ENCODE measurements at regions of chr6 and their contacts with region 1.

Region 1: GRCh38 chr6:28393911-28394662 is 5.5 kb downstream of the ZSCAN12 start:
- DNase-seq: peak; percentile 20
- H3K4me3 ChIP-seq: no peak overlapping the region
- H3K27ac ChIP-seq: no peak overlapping the region
- H3K4me1 ChIP-seq: peaks cover 13% of the 10 kb centered on the region in 2 experiments; a peak in 3 of 4 replicates
- H3K27me3 ChIP-seq: no peaks in the 10 kb centered on the region
- CTCF ChIP-seq: peak; percentile 53
- EP300 ChIP-seq: no peak
- RAD21 ChIP-seq: peak; percentile 23; the same call in 1 of the 2 replicates

Region 2: DNA sequence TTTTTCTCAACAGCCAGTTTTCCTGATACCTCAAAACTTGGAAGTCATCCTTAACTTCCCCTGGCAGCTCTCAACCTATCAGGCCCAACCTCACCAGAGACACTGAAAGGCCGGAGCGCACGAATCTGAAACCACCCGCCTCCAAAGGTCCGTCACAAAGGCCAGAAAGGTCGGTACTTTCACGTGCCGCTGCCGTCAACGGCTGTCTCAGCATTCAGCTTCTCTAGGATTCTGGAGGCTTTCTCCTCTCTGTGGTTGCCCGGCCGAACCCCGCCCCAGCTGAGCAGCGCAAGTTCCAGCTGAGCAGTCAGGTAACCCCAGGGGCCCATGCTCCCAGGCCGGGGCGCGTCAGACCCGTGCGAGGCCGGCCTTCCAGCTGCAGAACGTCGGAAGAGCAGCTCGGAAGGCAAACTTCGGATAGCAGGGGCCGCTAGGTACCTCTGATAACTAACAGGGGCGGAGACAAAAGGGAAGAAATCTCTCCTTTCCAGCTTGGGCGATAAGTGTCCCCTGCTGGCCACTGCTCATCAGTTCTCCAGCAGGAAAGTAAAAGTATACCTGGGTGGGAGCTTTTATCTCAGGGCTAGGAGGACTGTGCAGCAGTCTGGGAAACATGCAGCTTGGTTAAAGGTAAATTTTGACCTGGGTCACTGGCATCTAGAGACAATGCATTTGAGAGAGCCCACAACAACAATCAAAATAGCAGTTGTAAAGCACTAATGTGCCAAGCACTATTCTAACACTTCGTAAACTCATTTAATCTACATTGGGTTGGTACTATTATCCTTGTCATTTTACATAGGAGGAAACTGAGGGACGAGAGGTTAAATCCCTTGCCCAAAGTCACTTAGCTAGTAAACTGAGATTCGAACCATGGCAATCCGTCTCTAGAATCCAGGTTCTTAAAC is 10.6 kb before region 1 on chr6:
- CTCF ChIA-PET with region 1: interaction called, 15 read pairs
- POLR2A ChIA-PET with region 1: interaction called, 5 read pairs
- DNase-seq: peak; percentile 50
- H3K4me3 ChIP-seq: peak overlapping the region; percentile 46 to 61
- H3K27ac ChIP-seq: peak overlapping the region in 1 of 2 experiments; percentile 23; a peak in 3 of 4 replicates
- H3K4me1 ChIP-seq: no peaks in the 10 kb centered on the region; a peak in 2 of 4 replicates
- H3K27me3 ChIP-seq: no peaks in the 10 kb centered on the region
- CTCF ChIP-seq: peak; percentile 46
- EP300 ChIP-seq: no peak
- RAD21 ChIP-seq: no peak

Region 3: DNA sequence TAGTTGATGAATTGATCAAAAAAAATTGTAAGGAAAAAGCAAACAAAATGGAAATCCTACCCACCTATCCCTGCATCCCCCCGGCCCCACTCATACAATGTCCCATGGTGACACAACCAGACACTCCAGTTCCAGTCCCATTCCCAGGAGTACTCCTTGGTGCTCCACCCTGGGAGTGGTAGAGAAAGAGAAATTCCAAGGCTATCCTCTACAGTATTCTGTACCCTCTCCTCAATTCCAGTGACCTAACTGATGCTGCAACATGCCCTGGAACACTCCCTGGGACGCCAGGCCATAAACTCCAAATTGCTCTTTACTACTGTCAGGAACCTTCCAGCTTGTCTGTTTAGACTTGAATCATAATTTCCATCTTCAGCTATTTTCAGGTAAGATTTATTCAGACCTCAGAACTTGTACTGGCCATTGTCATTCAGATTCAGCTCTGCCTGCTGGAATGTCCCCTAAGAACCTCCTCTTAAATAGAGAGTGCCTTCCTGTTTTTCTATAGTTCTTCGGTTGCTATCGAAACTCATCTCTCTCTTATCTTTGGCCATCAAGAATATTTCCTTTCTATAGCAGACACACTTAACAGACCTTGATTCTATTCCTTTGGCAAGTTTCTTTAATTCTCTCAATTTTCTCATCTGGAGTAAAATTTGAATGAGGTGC is 112.9 kb after region 1 on chr6:
- CTCF ChIA-PET with region 1: no interaction called
- POLR2A ChIA-PET with region 1: no interaction called
- DNase-seq: no peak
- H3K4me3 ChIP-seq: no peak overlapping the region
- H3K27ac ChIP-seq: no peak overlapping the region
- H3K4me1 ChIP-seq: no peaks in the 10 kb centered on the region
- H3K27me3 ChIP-seq: no peaks in the 10 kb centered on the region; the same call in 1 of the 2 replicates
- CTCF ChIP-seq: no peak
- EP300 ChIP-seq: no peak
- RAD21 ChIP-seq: no peak

Measured in SK-N-SH (cell line).